Breast epithelium (tissue), 4 donors: ENCODE measurements at regions of chr19 and their contacts with region 1.

Region 1: DNA sequence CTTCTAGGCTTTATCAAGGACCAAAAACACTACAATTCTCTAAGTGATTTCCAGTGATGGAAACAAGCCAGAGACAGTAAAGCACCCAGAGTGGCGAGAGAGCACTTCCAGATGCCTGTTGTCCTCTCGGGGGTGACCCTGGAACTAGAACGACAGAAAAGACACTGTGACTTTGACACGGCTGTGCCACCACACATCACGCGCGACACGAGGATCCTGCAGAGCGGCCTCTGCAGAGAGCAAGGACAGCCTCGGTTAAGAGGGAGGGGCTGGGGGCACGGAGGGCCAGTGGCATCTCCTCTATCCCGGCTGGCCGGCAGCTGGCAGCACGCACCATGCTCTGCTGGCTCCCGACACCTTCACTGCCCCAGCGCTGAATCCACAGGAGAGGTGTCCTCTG is 42.3 kb downstream of the SUGP2 start:
- DNase-seq: no peak
- H3K4me3 ChIP-seq: no peak overlapping the region
- H3K27ac ChIP-seq: no peak overlapping the region
- H3K4me1 ChIP-seq: no peaks in the 10 kb centered on the region
- H3K27me3 ChIP-seq: no peaks in the 10 kb centered on the region
- CTCF ChIP-seq: no peak
- POLR2A ChIP-seq: no peak

Region 2: GRCh38 chr19:17488593-17489391 is 1502.2 kb before region 1 on chr19:
- intact Hi-C with region 1: no loop called
- DNase-seq: peak; percentile 71 to 72
- H3K4me3 ChIP-seq: peak overlapping the region in 2 of 3 donors; percentile 23 to 35
- H3K27ac ChIP-seq: peak overlapping the region; percentile 48 to 75
- H3K4me1 ChIP-seq: no peaks in the 10 kb centered on the region
- H3K27me3 ChIP-seq: no peaks in the 10 kb centered on the region
- CTCF ChIP-seq: no peak
- POLR2A ChIP-seq: no peak

Region 3: DNA sequence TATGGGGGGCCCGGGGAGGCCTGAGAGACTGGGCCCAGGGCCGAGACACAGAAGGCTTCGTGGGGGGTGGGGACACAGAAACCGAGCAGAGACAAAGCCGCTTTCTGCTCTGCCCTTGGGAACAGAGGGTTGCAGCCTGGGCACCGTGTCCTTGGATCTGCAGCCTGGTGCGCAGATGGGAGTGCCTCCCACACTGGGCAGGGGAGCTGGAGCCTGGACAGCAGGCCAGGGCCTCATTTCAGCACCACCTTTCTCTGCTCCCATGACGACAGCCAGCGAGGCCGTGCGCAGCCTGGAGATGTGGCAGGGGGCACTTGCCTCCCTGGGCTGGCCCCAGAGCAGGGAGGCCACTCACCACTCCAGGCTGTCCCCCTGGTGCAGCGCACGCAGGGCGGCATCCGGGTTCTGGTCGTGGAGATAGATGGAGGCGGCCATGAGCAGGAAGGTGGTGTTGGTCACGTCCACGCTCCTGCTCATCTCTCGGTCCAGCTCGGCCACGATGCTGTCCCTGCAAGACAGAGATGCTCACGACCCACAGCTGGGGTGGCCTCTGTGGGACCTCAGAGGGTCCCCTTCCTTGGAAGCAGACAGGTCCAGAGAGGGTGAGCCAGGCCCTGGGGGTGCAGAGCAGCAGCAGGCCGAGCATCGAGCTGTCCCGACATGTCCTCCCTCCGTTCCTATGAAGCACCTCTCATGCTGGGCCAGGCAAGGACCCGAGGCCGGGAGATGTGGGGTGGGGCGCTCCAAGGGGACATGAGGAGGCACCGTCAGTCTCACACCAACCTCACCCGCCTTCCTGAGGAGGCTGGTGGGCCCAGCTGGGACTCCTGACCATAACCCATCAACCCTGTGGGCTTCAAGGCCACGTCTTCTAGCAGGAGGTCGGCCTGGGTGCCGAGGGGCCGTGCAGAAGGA is 84.1 kb before region 1 on chr19:
- intact Hi-C with region 1: loop called (anchors 1 kb)
- DNase-seq: no peak
- H3K4me3 ChIP-seq: no peak overlapping the region
- H3K27ac ChIP-seq: no peak overlapping the region
- H3K4me1 ChIP-seq: no peaks in the 10 kb centered on the region
- H3K27me3 ChIP-seq: no peaks in the 10 kb centered on the region
- CTCF ChIP-seq: no peak
- POLR2A ChIP-seq: no peak